ENCODE measurements at regions of chr4 and their contacts with region 1.

Region 1: DNA sequence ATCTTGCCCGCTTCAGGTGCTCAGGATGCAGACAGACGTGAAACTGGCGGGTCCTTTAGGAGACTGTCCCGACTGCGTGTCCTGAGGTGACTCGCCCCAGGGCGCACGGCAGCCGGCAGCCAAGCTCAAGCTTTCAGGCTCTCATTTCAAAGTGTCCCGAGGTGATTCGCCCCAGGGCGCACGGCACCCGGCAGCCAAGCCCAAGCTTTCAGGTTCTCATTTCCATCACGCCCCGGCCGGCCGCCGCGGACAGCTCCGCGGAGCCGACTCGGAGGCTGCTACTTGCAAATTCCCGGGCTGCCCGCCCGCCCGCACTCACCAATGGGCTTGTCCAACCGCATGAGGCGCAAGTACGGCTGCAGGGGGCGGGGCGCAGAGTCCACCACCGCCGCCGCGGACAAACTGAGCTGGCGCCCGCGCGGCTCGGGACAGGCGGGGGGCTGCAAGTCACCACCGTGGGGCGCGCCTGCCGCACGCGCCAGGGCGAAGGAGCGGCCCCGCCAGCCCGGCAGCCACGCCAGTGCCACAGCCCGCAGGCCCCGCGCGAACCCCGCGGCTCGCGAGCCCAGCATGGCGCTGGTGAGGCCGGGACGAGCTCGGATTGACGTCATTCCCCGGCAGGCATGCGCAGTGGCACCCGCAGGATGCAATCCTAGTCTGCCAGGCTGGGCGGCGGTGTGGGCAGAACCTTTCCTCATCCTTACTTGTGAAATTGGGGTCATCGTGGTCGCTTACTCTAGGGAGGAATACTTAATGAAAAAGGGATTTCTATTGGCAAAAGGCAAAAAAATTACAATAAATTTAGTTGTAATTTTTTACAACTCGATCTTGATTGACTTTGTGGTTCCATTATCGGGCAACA is at the start of gene COQ2:
- DNase-seq: peak; percentile 95 to 97
- H3K4me3 ChIP-seq: peak within 1 kb of the TSS; percentile 68 to 82
- H3K27ac ChIP-seq: peak within 1 kb of the TSS; percentile 93 to 95
- H3K4me1 ChIP-seq: peaks cover 0 to 17% (median 8%) of the 10 kb centered on the region in 4 donors
- H3K27me3 ChIP-seq: no peaks in the 10 kb centered on the region
- CTCF ChIP-seq: peak; percentile 40

Region 2: DNA sequence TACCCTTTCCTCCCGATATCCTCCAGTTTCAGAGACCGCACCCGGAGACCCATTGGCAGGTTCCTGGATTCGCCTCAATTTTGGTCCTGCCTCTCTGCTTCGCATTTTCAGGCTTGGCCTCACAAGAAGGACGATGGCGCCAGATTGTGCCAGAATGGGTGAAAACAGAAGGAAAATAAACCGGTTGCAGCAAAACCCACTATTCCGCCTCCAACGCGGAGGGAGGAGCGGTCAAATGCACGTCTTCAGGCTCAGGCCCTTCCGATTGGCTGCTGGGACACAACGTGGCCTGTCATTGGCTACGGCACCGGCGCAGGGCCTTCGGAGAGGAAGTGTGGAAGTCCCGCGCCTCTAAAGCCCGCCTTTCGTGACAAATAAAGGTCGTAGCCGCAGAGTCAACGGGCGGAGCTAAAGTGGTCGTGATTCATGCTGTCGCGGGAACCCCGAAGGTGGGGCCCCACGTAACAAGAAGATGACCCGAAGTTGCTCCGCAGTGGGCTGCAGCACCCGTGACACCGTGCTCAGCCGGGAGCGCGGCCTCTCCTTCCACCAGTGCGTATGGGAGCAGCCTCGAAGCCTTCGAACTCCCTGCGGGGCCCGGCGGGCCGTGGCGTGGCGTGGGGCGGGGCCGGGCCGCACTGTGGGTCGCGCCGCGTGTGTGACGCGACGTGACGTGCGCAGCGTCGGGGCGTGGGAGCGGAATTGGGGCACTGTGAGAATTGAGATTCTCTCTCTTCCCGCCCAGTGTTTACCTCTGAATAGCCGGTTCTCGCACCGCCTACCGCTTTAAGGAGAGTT is 383.9 kb before region 1 on chr4 and contains the start of gene THAP9:
- intact Hi-C with region 1: loop called (anchors 10 kb)
- DNase-seq: peak; percentile 99
- H3K4me3 ChIP-seq: peak within 1 kb of the TSS; percentile 60 to 68
- H3K27ac ChIP-seq: peak within 1 kb of the TSS; percentile 91 to 93
- H3K4me1 ChIP-seq: peaks cover 0 to 41% (median 19%) of the 10 kb centered on the region in 4 donors
- H3K27me3 ChIP-seq: no peaks in the 10 kb centered on the region
- CTCF ChIP-seq: no peak

Region 3: GRCh38 chr4:83034630-83035494 is 249.6 kb before region 1 on chr4 and contains the start of gene COPS4:
- intact Hi-C with region 1: loop called (anchors 5 kb)
- DNase-seq: peak; percentile 98 to 99
- H3K4me3 ChIP-seq: peak within 1 kb of the TSS; percentile 60 to 68
- H3K27ac ChIP-seq: peak within 1 kb of the TSS; percentile 77 to 89
- H3K4me1 ChIP-seq: peaks cover 0 to 19% (median 12%) of the 10 kb centered on the region in 4 donors
- H3K27me3 ChIP-seq: no peaks in the 10 kb centered on the region
- CTCF ChIP-seq: peak; percentile 45 to 56

Region 4: GRCh38 chr4:83074086-83074704 is 210.2 kb before region 1 on chr4:
- intact Hi-C with region 1: loop called (anchors 10 kb)
- DNase-seq: no peak
- H3K4me3 ChIP-seq: no peak overlapping the region
- H3K27ac ChIP-seq: no peak overlapping the region
- H3K4me1 ChIP-seq: no peaks in the 10 kb centered on the region
- H3K27me3 ChIP-seq: no peaks in the 10 kb centered on the region
- CTCF ChIP-seq: peak; percentile 59

Region 5: GRCh38 chr4:83455281-83456129 is 171.1 kb after region 1 on chr4 and contains the starts of genes HELQ and MRPS18C:
- intact Hi-C with region 1: loop called (anchors 10 kb)
- DNase-seq: peak; percentile 98 to 99
- H3K4me3 ChIP-seq: peak within 1 kb of the TSS; percentile 75 to 91
- H3K27ac ChIP-seq: peak within 1 kb of the TSS; percentile 95 to 98
- H3K4me1 ChIP-seq: peaks cover 0 to 29% (median 26%) of the 10 kb centered on the region in 4 donors
- H3K27me3 ChIP-seq: no peaks in the 10 kb centered on the region
- CTCF ChIP-seq: peak in 1 of 2 experiments; percentile 20